MCF 10A (cell line): ENCODE measurements at regions of chr15 and their contacts with region 1.

Region 1: DNA sequence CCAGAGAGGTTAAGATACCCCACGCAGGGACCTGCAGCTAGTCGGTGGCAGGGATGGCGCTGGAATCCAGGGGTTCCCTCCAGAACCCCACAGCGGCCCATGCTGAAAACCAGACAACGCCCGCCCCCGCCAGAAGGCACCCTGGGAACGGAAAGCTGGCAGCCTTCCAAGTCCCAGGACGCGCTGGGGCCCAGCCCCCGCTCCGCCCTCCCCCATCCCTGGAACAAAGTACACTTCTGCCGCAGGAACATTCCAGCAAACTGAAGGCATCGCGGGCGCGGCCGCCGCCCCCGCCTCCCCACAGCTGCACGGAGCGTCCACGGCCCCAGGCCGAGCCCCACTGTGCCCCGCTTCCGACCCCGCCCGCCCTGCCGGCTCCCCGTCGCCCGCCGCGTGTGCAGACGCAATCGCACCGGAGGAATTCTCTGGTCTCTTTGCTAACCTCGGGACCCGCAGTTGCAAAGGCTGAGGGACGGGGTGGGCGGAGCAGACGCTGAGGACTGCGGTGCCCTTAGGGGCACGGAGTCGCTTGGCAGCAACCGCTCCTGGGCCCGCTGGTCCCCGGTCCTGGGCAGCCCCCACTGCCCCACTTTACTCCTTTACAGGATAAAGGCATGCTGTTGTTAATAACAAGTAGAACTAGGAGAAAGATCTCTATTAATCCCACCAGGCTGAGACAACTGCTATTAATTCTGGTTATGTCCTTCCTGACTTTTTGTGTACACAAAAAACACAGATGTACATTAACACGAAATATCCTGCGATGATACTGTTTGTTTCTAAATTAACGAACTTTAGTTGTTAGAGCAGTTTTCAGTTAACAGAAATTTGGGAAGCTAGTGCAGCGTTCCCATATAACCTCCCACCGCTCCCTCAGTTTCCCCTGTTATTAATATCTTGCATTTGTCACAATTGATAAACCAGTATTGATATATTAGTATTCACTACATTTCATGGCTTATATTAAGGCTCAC is 45.0 kb upstream of the RNU6-1 start:
- DNase-seq: peak; percentile 93
- H3K4me3 Mint-ChIP-seq: peak overlapping the region; percentile 50
- H3K27ac Mint-ChIP-seq: peak overlapping the region; percentile 73
- H3K4me1 Mint-ChIP-seq: peaks cover 51% of the 10 kb centered on the region
- H3K27me3 Mint-ChIP-seq: no peaks in the 10 kb centered on the region
- CTCF ChIP-seq: no peak

Region 2: DNA sequence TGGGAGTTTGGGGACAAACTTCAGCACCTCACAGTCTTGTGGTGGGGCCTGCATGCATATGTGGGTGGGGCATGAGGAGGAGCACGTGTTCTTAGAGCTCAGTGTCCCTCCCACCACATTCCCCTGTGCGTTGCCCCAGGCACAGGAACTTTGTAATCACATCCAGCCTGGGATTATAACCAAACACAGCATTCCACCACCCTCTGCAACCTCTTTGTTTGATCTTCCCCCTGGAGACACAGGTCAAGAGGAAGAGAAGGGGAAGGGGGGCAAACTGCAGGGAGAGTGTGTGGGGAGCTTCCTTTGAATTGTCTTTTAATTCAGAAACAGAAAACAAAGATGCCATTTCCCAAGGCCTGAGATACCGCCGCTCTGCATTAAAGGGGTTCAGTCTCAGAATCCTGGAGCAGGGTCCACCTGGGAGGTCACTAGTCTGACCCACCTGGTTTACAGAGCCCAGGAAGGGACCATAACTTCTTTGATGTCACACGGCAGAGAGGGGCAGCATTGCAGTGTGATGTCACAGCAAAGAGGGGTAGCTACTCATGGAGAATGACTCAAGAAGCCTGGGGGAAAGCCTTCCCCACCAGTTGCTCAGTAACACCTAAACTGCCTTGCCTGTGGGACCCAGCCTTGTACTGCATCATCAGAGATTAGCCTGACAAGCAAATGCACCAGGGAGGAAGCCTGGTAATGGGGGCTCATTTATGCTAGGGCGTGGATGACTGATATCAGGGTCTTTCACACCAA is 61.3 kb after region 1 on chr15:
- CTCF ChIA-PET with region 1: no interaction called
- POLR2A ChIA-PET with region 1: interaction called, 3 read pairs
- intact Hi-C with region 1: loop called (anchors 5 kb)
- DNase-seq: peak; percentile 87
- H3K4me3 Mint-ChIP-seq: peak overlapping the region; percentile 58
- H3K27ac Mint-ChIP-seq: peak overlapping the region; percentile 95
- H3K4me1 Mint-ChIP-seq: peaks cover 43% of the 10 kb centered on the region
- H3K27me3 Mint-ChIP-seq: no peaks in the 10 kb centered on the region
- CTCF ChIP-seq: no peak

Region 3: DNA sequence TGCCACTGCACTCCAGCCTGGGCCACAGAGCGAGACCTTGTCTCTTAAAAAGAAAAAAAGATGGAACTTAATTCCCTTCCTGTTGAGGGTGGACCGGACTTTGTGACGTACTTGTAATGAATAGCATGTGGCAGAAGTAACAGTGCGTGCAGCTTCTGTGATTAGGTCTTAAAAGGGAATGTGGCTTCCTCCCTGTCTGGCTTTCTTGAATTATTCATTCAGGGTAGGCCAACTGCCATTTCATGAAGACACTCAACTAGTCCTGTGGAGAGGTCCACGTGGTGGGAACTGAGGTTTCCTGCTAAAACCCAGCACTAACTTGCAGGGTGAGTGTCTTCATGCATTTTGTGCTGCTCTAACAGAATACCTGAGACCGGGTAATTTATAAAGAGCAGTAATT is 70.5 kb after region 1 on chr15:
- CTCF ChIA-PET with region 1: interaction called, 3 read pairs
- POLR2A ChIA-PET with region 1: interaction called, 34 read pairs
- intact Hi-C with region 1: no loop called
- DNase-seq: no peak
- H3K4me3 Mint-ChIP-seq: no peak overlapping the region
- H3K27ac Mint-ChIP-seq: peak overlapping the region; percentile 92
- H3K4me1 Mint-ChIP-seq: peaks cover 54% of the 10 kb centered on the region
- H3K27me3 Mint-ChIP-seq: no peaks in the 10 kb centered on the region
- CTCF ChIP-seq: no peak